Gastrocnemius medialis (tissue), 4 donors: ENCODE measurements at regions of chr6 and their contacts with region 1.

Region 1: GRCh38 chr6:166956444-166957086 is at the start of gene RNASET2:
- DNase-seq: peak; percentile 91 to 93
- ATAC-seq: peak; percentile 94 to 95
- H3K4me3 ChIP-seq: peak within 1 kb of the TSS; percentile 88 to 99 (median 92)
- H3K27ac ChIP-seq: peak within 1 kb of the TSS; percentile 78 to 82 (median 78)
- H3K4me1 ChIP-seq: peaks cover 0 to 18% of the 10 kb centered on the region in 2 donors
- H3K27me3 ChIP-seq: no peaks in the 10 kb centered on the region
- CTCF ChIP-seq: no peak
- POLR2A ChIP-seq: peak; percentile 39 to 58
- total RNA-seq, gene RNASET2: 4.9 to 9.6 (median 6.5) TPM

Region 2: GRCh38 chr6:166619912-166620311 is 336.7 kb before region 1 on chr6:
- in situ Hi-C with region 1: no loop called
- intact Hi-C with region 1: no loop called
- DNase-seq: no peak
- ATAC-seq: peak; percentile 49 to 69
- H3K4me3 ChIP-seq: no peak overlapping the region
- H3K27ac ChIP-seq: peak overlapping the region; percentile 64 to 82 (median 71)
- H3K4me1 ChIP-seq: peaks cover 38 to 82% of the 10 kb centered on the region in 2 donors
- H3K27me3 ChIP-seq: no peaks in the 10 kb centered on the region
- CTCF ChIP-seq: no peak
- POLR2A ChIP-seq: no peak

Region 3: DNA sequence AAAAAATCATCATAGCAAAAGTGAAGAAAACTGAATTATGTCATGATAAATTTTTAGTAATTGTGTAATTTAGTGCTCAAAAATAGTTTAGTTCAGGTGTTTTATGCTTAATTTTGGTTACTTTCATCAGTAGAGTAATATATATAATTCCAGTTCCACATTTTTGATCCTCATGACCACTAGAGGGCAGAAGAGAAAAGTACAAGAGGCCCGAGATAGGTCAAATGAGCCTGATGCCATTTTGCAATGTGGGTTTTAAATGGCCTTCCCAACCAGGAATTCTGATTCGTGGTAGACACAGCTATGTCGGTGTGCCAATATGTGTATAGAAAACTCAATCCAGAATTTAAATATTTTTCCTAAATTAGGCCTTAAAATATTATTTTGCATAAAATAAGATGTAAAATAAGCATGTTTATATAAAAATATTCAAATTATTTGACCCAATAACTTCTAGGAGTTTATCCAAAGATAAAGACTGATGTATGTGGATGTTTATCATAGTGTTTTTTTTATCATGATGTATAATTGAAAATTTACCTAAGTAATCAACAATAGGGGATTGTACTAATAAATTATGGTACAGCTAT is 169.8 kb before region 1 on chr6:
- in situ Hi-C with region 1: no loop called
- intact Hi-C with region 1: loop called (anchors 10 kb)
- DNase-seq: no peak
- ATAC-seq: peak; percentile 49 to 60
- H3K4me3 ChIP-seq: no peak overlapping the region
- H3K27ac ChIP-seq: no peak overlapping the region
- H3K4me1 ChIP-seq: no peaks in the 10 kb centered on the region
- H3K27me3 ChIP-seq: no peaks in the 10 kb centered on the region
- CTCF ChIP-seq: peak; percentile 45 to 75 (median 51)
- POLR2A ChIP-seq: no peak

Region 4: GRCh38 chr6:166999145-166999883 is 42.7 kb after region 1 on chr6 and contains the start of gene CEP43:
- in situ Hi-C with region 1: no loop called
- intact Hi-C with region 1: loop called (anchors 1 kb)
- DNase-seq: peak; percentile 83 to 88
- ATAC-seq: peak; percentile 95 to 96
- H3K4me3 ChIP-seq: peak within 1 kb of the TSS; percentile 66 to 97 (median 75)
- H3K27ac ChIP-seq: peak within 1 kb of the TSS; percentile 54 to 79 (median 67)
- H3K4me1 ChIP-seq: peaks cover 9 to 18% of the 10 kb centered on the region in 2 donors
- H3K27me3 ChIP-seq: no peaks in the 10 kb centered on the region
- CTCF ChIP-seq: peak in 2 of 5 experiments; percentile 20 to 21
- POLR2A ChIP-seq: no peak
- total RNA-seq, gene CEP43: 4.4 to 8.3 (median 5.9) TPM